Heart right ventricle (tissue), 16 donors: ENCODE measurements at regions of chr11 and their contacts with region 1.

Region 1: GRCh38 chr11:111777094-111778046 is 11.2 kb upstream of the PPP2R1B start:
- DNase-seq: peak in 1 of 2 donors; percentile 44
- ATAC-seq: peak; percentile 66 to 90 (median 84)
- H3K4me3 ChIP-seq: no peak overlapping the region
- H3K27ac ChIP-seq: peak overlapping the region in 2 of 10 donors; percentile 5 to 8
- H3K4me1 ChIP-seq: peaks cover 0 to 25% (median 7%) of the 10 kb centered on the region in 9 donors
- H3K27me3 ChIP-seq: no peaks in the 10 kb centered on the region
- CTCF ChIP-seq: peak; percentile 62 to 91 (median 82)

Region 2: GRCh38 chr11:111586388-111586831 is 191.0 kb before region 1 on chr11:
- intact Hi-C with region 1: loop called in 3 of 10 experiments (anchors 1 to 5 kb)
- DNase-seq: peak in 1 of 2 donors; percentile 50
- ATAC-seq: peak in 4 of 8 donors; percentile 27 to 57 (median 44)
- H3K4me3 ChIP-seq: no peak overlapping the region
- H3K27ac ChIP-seq: no peak overlapping the region
- H3K4me1 ChIP-seq: no peaks in the 10 kb centered on the region
- H3K27me3 ChIP-seq: no peaks in the 10 kb centered on the region
- CTCF ChIP-seq: peak; percentile 21 to 73 (median 62)

Region 3: DNA sequence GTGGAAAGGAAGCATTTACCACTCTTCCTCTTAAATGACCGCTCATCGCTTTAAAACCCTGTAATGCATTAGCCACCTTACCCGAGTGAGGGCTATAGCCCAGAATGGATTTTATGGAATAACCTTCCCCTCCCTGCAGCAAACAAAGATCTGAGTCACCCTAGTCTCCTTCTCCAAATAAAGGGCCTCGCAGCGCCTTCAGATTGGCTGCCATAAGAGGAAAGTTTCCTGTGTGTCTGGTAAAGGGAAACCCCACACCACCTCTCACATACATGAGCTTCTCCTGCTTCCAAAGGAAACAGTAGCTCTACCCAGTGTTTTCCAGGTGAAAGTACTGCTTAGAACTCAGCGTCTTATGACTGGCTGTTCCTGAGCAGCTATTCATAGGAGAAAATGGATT is 58.9 kb before region 1 on chr11:
- intact Hi-C with region 1: loop called in 1 of 10 experiments (anchors 10 kb)
- DNase-seq: no peak
- ATAC-seq: peak in 7 of 8 donors; percentile 9 to 63 (median 38)
- H3K4me3 ChIP-seq: no peak overlapping the region
- H3K27ac ChIP-seq: peak overlapping the region in 4 of 10 donors; percentile 13 to 48 (median 33)
- H3K4me1 ChIP-seq: peaks cover 0 to 34% (median 6%) of the 10 kb centered on the region in 9 donors
- H3K27me3 ChIP-seq: no peaks in the 10 kb centered on the region
- CTCF ChIP-seq: no peak

Region 4: GRCh38 chr11:111819829-111820237 is 42.5 kb after region 1 on chr11:
- intact Hi-C with region 1: loop called in 2 of 10 experiments (anchors 5 kb)
- DNase-seq: no peak
- ATAC-seq: peak in 5 of 8 donors; percentile 7 to 25 (median 14)
- H3K4me3 ChIP-seq: no peak overlapping the region
- H3K27ac ChIP-seq: peak overlapping the region; percentile 20 to 87 (median 73)
- H3K4me1 ChIP-seq: peaks cover 0 to 31% (median 24%) of the 10 kb centered on the region in 9 donors
- H3K27me3 ChIP-seq: no peaks in the 10 kb centered on the region
- CTCF ChIP-seq: no peak

Region 5: DNA sequence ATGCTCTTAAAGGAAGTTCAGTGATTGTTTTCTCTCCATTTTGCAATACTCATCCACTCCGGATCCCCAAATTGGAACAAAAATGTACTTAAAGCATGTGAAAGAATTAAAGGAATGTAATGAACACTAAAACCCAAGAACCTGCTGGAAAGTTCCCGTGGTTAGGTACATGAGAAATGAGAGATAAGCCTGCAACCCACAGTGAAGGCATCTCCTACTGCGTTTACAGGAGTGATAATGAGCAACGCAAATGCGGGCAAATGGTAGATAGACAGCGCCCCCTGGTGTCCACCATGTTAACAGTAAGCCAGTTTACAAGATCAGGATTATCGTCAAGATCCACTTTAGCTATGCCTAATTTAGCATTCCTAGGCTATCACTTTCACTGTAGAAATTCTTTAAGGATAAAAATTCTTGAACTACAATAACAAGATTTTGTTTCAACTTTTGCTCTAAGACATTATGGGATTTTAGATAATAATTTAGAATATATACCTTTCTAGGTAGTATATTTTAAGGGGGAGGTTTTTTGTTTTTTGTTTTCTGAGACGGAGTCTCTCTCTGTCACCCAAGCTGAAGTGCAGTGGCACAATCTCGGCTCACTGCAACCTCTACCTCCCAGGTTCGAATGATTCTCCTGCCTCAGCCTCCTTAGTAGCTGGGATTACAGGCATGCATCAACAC is 64.1 kb after region 1 on chr11:
- intact Hi-C with region 1: loop called in 8 of 10 experiments (anchors 1 to 10 kb)
- DNase-seq: peak; percentile 81 to 89
- ATAC-seq: peak; percentile 81 to 94 (median 90)
- H3K4me3 ChIP-seq: no peak overlapping the region
- H3K27ac ChIP-seq: no peak overlapping the region
- H3K4me1 ChIP-seq: peaks cover 0 to 26% (median 10%) of the 10 kb centered on the region in 9 donors
- H3K27me3 ChIP-seq: no peaks in the 10 kb centered on the region
- CTCF ChIP-seq: peak; percentile 77 to 94 (median 90)